Right ventricle myocardium superior (tissue), 1 donor: ENCODE measurements at regions of chr11 and their contacts with region 1.

Region 1: DNA sequence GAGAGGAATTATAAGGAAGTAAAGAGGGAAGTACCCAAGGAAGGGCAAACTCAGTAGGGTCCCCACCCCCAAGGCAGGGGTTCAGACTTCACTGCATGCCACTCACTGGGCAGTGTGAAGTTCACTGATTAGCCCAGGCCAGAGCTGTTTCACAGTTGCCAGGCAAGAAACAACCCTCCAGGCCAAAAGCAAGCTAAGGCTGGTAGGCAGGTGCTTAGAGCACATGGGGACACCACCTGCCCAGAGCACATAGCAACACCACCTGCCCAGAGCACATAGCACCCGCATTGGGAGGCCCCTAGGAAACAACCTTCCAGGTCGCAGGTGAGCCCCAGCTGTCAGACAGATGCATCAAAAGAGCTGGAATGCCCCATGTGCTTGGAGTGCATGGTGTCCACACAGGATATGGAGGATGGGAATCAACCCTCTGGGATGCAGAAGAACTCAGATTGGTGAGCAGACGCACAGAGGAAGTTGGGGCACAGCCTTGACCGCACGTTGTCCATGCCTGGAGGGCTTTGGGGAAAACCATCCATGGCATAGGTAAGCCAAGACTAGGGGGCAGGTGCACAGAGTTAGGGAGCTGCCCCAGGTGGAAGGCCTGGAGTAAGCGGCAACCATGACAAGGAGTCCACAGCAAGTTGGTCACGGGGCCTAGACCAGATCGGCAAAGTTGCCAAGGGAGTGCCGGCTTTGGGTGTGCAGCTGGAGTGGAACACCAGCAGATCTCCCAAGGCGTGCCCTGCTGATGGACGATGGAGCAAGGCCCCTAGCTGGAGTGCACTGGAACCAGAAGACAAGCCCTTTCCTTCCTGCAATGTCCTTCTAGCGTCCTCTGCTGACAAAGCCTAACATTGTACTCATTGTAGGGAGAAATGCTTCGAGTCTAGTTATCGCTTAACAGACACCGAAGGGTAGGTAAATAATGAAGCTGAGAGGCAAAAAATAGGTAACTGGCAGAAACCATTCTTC is 7.8 kb upstream of the TMEM216 start:
- DNase-seq: no peak
- ATAC-seq: peak; percentile 9

Region 2: DNA sequence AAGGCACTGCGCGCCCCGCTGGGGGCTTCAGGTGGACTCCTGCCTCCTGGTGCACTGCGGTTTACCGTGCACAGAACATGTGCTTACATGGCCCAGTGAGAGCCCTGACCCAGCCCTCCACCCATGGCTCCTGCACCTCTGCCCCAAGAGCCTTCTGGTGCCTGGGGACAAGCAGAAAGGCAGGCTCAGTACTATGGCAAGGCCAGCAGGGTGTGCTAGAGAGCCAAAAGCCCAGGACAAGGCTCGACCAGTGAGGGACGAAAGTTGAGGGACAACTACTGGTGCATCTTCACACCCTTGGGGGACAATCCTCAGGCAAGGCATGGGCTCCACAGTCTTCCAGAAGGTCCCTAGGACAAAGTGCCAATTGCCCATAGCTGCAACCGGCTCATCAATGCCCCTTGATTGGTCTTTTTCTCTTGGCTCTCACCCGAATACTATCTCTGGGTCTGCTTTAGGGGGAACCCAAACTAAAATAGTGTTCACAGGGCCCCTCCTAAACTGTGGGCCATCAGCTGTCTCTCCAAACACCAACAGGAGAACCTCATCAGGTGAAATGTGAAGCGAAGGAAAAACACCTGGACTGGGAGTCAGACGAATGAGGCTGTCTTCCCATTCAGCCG is 130.0 kb before region 1 on chr11:
- intact Hi-C with region 1: loop called (anchors 10 kb)
- DNase-seq: peak; percentile 70
- ATAC-seq: peak; percentile 52

Region 3: GRCh38 chr11:61336171-61336922 is 48.2 kb before region 1 on chr11:
- intact Hi-C with region 1: loop called (anchors 2 kb)
- DNase-seq: peak; percentile 86
- ATAC-seq: peak; percentile 68